CD8-positive, alpha-beta T cell (primary cell): ENCODE measurements at regions of chr9 and their contacts with region 1.

Region 1: DNA sequence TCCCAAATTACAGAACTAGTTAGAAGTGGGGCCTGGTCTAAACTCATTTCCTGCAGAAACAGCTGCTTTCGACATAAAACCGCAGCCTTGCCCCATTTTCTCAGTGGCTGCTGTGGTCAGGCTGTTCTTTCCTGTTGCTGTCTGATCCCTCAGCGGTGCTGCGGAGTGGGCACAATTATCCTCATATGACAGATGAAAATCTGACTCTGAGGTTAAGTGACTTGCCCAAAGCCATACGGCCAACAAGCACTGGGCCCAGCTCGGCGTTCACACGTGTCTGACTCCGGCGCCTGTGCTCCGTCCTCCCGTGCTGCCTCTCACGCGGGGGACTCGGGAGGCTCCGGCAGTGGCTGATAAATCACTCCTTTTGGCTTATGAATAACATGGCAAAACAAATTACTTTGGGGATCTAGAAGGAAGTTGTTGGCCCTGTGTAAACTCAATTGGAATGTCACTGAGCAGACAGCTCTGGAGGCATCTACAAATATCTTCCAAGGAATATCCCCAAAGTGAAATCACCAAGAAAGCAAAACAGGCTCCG is 142.6 kb upstream of the LMX1B start:
- DNase-seq: peak; percentile 56 to 93 (median 78)
- ATAC-seq: peak; percentile 73
- H3K4me3 ChIP-seq: peak overlapping the region; percentile 18 to 40
- H3K4me3 Mint-ChIP-seq: peak overlapping the region; percentile 71
- H3K27ac ChIP-seq: peak overlapping the region; percentile 46 to 63
- H3K27ac Mint-ChIP-seq: peak overlapping the region; percentile 94
- H3K4me1 ChIP-seq: peaks cover 59% of the 10 kb centered on the region
- H3K4me1 Mint-ChIP-seq: peaks cover 94% of the 10 kb centered on the region
- H3K27me3 ChIP-seq: no peaks in the 10 kb centered on the region
- H3K27me3 Mint-ChIP-seq: no peaks in the 10 kb centered on the region
- CTCF ChIP-seq: no peak

Region 2: DNA sequence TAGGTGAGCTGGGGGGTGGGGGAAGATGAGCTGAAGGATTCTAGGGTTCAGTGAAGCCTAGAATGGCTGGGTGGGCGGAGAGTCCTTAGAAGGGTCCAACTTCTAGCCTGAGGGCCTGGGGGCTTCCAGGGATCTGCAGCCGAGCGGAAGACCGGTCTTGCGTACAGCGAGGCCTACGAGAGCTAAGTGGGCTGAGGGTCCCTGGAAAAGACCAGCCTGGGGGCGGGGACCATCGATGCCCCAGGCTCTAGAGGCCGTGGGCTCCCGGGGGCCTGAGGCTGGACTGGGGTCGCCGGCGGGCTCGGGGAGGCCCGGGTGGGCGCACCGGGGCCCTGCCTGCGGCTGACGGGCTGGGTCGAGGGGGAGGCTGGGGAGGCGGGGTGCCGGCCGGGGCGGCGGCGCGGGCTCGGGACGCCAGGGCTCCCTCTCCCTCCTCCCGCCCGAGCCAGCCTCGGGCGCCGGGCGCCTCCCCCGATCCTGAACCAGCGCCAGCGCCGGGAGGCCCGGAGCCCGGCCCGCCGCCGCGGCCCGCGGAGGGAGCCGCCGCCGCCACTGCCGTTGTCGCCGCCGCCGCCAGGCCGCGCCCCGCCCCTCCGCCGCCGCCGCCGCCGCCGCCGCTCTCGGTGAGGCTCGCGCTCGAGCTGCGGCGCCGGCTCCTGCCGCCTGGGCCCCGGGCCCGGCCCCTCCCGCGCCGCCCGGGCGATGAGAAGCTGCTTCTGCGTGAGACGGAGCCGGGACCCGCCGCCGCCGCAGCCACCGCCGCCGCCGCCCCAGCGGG is 144.7 kb before region 1 on chr9 and contains the start of gene MVB12B:
- CTCF ChIA-PET with region 1: interaction called, 3 read pairs
- POLR2A ChIA-PET with region 1: interaction called, 10 read pairs
- intact Hi-C with region 1: loop called (anchors 5 kb)
- DNase-seq: peak; percentile 29 to 82 (median 53)
- ATAC-seq: peak; percentile 76
- H3K4me3 ChIP-seq: peak within 1 kb of the TSS; percentile 56 to 61
- H3K4me3 Mint-ChIP-seq: peak within 1 kb of the TSS; percentile 88
- H3K27ac ChIP-seq: peak within 1 kb of the TSS; percentile 46 to 74
- H3K27ac Mint-ChIP-seq: peak within 1 kb of the TSS; percentile 97
- H3K4me1 ChIP-seq: peaks cover 46% of the 10 kb centered on the region
- H3K4me1 Mint-ChIP-seq: peaks cover 46% of the 10 kb centered on the region
- H3K27me3 ChIP-seq: no peaks in the 10 kb centered on the region
- H3K27me3 Mint-ChIP-seq: no peaks in the 10 kb centered on the region
- CTCF ChIP-seq: no peak
- total RNA-seq, gene MVB12B: 25.7 to 26.9 TPM

Region 3: GRCh38 chr9:126411225-126411947 is 59.8 kb before region 1 on chr9:
- CTCF ChIA-PET with region 1: interaction called, 3 read pairs
- POLR2A ChIA-PET with region 1: interaction called, 3 read pairs
- intact Hi-C with region 1: loop called (anchors 1 to 5 kb)
- DNase-seq: peak in 4 of 9 experiments; percentile 23 to 84 (median 70)
- ATAC-seq: peak; percentile 92
- H3K4me3 ChIP-seq: peak overlapping the region; percentile 25 to 40
- H3K4me3 Mint-ChIP-seq: peak overlapping the region; percentile 81
- H3K27ac ChIP-seq: peak overlapping the region; percentile 38 to 73
- H3K27ac Mint-ChIP-seq: peak overlapping the region; percentile 93
- H3K4me1 ChIP-seq: peaks cover 42% of the 10 kb centered on the region
- H3K4me1 Mint-ChIP-seq: peaks cover 43% of the 10 kb centered on the region
- H3K27me3 ChIP-seq: no peaks in the 10 kb centered on the region
- H3K27me3 Mint-ChIP-seq: no peaks in the 10 kb centered on the region
- CTCF ChIP-seq: no peak

Region 4: DNA sequence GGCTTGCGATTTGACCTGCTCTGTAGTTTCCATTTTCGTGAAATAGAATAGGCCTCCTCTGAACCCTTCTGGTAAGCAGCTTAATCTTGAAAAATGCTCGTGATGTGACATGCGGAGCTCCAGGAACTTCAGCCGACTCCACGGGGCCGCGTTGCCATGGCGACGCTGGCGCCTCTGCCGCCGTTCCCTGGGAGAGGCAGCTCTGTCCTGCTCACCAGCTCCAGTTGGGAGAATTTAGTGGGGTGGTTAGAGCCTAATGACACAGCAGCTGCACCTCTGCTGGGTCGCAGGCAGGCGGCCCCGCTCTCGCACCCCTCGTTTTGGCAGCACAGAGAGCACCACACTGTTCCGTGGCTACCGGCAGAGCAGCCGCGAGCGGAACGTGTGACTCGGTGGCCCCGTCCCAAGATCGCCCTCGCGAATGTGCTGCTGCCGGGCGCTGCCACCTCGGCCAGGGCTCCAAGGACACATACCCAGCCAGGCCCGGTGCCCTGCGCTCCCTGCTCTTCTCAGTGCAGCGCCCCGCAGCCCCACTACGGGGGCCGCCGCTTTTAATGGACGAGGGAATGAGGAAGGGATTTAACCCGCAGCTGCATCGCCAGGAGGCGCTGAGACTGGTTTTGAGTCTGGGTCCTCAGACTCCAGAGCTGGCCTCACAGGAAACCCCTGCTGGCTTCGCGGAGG is 11.3 kb after region 1 on chr9:
- CTCF ChIA-PET with region 1: interaction called, 10 read pairs
- POLR2A ChIA-PET with region 1: interaction called, 7 read pairs
- intact Hi-C with region 1: no loop called
- DNase-seq: no peak
- ATAC-seq: no peak
- H3K4me3 ChIP-seq: no peak overlapping the region
- H3K4me3 Mint-ChIP-seq: no peak overlapping the region
- H3K27ac ChIP-seq: no peak overlapping the region
- H3K27ac Mint-ChIP-seq: no peak overlapping the region
- H3K4me1 ChIP-seq: peaks cover 20% of the 10 kb centered on the region
- H3K4me1 Mint-ChIP-seq: peaks cover 30% of the 10 kb centered on the region
- H3K27me3 ChIP-seq: no peaks in the 10 kb centered on the region
- H3K27me3 Mint-ChIP-seq: no peaks in the 10 kb centered on the region
- CTCF ChIP-seq: no peak